AG04450 (cell line): ENCODE measurements at regions of chr7 and their contacts with region 1.

Region 1: DNA sequence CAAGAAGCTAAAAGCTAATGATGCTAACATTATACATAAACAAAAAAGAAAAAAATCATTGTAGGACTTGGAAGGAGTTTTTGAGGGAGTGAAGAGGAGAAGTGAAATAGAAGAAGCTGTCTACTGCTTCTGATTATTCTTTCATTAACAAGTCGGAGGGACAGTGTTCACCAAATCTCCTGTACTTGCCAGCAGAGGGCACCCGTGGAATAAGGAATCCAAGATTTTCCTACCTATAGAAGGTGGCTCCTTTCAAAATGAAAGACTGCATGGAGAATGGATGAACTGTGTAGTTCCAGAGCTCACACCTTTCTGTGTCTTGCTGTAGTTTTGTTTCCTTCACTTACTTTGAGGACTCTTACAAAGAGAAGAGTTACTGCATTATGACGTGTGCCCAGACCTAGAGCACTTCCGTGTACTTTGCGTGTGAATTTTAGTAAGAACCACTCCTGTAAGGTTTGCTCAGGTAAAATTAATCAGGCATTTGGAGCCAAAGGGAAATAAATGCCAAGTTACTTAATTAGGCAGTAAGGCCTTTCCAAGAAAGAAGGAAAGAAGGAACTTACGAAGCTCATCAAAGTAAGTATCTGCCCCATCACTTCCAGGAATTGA is 145.1 kb downstream of the SEMA3D start:
- DNase-seq: peak; percentile 37
- H3K4me3 ChIP-seq: no peak overlapping the region
- H3K27ac ChIP-seq: no peak overlapping the region
- H3K27me3 ChIP-seq: no peaks in the 10 kb centered on the region
- CTCF ChIP-seq: peak; percentile 81

Region 2: GRCh38 chr7:84484502-84485079 is 557.1 kb before region 1 on chr7:
- CTCF ChIA-PET with region 1: no interaction called
- POLR2A ChIA-PET with region 1: no interaction called
- DNase-seq: no peak
- H3K4me3 ChIP-seq: no peak overlapping the region
- H3K27ac ChIP-seq: no peak overlapping the region
- H3K27me3 ChIP-seq: no peaks in the 10 kb centered on the region
- CTCF ChIP-seq: no peak

Region 3: GRCh38 chr7:85014936-85015660 is 26.6 kb before region 1 on chr7:
- CTCF ChIA-PET with region 1: no interaction called
- POLR2A ChIA-PET with region 1: no interaction called
- DNase-seq: no peak
- H3K4me3 ChIP-seq: no peak overlapping the region
- H3K27ac ChIP-seq: no peak overlapping the region
- H3K27me3 ChIP-seq: no peaks in the 10 kb centered on the region
- CTCF ChIP-seq: 0 out of 2 replicates have a peak, but pooled peaks have one; percentile 16

Region 4: DNA sequence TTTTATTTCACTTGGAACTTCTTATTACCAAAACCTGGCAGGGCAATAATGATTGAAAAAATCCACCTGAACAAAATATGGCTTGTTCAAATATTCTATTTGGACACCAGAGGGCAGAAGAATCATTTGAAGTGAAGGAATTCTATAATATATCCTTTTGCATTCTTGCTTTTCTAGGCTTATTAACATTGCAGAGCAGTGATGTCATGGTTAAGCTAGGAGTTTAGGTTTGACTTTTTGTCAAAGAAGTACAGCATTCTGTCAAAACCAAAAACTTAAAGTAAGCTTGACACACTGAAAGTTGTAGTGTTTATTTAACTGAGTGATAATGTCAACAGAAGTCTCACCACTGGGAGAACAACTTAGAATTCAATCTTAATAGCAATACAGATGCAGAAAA is 10.8 kb before region 1 on chr7:
- CTCF ChIA-PET with region 1: interaction called, 14 read pairs
- POLR2A ChIA-PET with region 1: no interaction called
- DNase-seq: peak; percentile 44
- H3K4me3 ChIP-seq: no peak overlapping the region
- H3K27ac ChIP-seq: no peak overlapping the region
- H3K27me3 ChIP-seq: no peaks in the 10 kb centered on the region
- CTCF ChIP-seq: peak; percentile 56

Region 5: GRCh38 chr7:85186521-85187241 is 145.0 kb after region 1 on chr7 and contains the start of gene SEMA3D:
- CTCF ChIA-PET with region 1: interaction called, 42 read pairs
- POLR2A ChIA-PET with region 1: no interaction called
- DNase-seq: peak; percentile 70
- H3K4me3 ChIP-seq: peak within 1 kb of the TSS; percentile 80
- H3K27ac ChIP-seq: no peak within 1 kb of the TSS
- H3K27me3 ChIP-seq: no peaks in the 10 kb centered on the region
- CTCF ChIP-seq: peak; percentile 89
- polyA plus RNA-seq, gene SEMA3D: 5.7 and 7.4 TPM in 2 replicates

Region 6: GRCh38 chr7:85464042-85464651 is 422.4 kb after region 1 on chr7:
- CTCF ChIA-PET with region 1: interaction called, 22 read pairs
- POLR2A ChIA-PET with region 1: no interaction called
- DNase-seq: no peak
- H3K4me3 ChIP-seq: no peak overlapping the region
- H3K27ac ChIP-seq: no peak overlapping the region
- H3K27me3 ChIP-seq: no peaks in the 10 kb centered on the region
- CTCF ChIP-seq: peak; percentile 33; the same call in 1 of the 2 replicates

Region 7: GRCh38 chr7:85750454-85750949 is 708.8 kb after region 1 on chr7:
- CTCF ChIA-PET with region 1: interaction called, 22 read pairs
- POLR2A ChIA-PET with region 1: no interaction called
- DNase-seq: no peak
- H3K4me3 ChIP-seq: no peak overlapping the region
- H3K27ac ChIP-seq: no peak overlapping the region
- H3K27me3 ChIP-seq: no peaks in the 10 kb centered on the region
- CTCF ChIP-seq: peak; percentile 92

Region 8: GRCh38 chr7:85851571-85852193 is 810.0 kb after region 1 on chr7:
- CTCF ChIA-PET with region 1: interaction called, 31 read pairs
- POLR2A ChIA-PET with region 1: no interaction called
- DNase-seq: peak; percentile 29
- H3K4me3 ChIP-seq: no peak overlapping the region
- H3K27ac ChIP-seq: no peak overlapping the region
- H3K27me3 ChIP-seq: no peaks in the 10 kb centered on the region
- CTCF ChIP-seq: peak; percentile 56